ENCODE measurements at regions of chr17 and their contacts with region 1.

Region 1: DNA sequence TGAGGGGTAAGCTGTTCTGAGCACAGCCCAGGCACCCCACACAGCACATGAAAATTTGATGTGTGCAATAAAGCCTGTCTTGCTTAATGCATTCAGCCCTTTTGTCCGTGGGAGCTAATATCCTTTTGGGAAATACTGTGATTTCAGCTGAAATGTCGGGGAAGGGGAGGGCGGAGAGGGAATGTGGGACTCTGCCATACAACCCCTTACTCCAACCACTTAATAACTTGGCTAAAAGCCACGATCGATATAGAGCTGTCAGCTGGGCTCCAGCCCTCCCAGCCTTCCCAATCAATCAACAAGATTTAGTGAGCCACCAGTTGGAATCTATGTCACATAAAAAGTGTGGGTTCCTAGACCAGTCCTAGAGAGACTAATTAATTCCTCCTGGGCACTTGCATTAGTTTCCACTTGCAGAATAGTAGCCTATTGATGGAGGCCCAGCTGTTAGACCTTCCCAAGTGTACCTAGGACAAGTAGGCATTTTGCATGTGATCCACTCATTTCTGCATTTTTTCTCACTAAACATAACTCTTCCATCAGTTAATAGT is 82.7 kb upstream of the PIRT start:
- DNase-seq: no peak
- H3K4me3 ChIP-seq: no peak overlapping the region
- H3K27ac ChIP-seq: no peak overlapping the region
- H3K4me1 ChIP-seq: no peaks in the 10 kb centered on the region
- H3K27me3 ChIP-seq: no peaks in the 10 kb centered on the region
- CTCF ChIP-seq: no peak
- EP300 ChIP-seq: no peak
- POLR2A ChIP-seq: no peak

Region 2: DNA sequence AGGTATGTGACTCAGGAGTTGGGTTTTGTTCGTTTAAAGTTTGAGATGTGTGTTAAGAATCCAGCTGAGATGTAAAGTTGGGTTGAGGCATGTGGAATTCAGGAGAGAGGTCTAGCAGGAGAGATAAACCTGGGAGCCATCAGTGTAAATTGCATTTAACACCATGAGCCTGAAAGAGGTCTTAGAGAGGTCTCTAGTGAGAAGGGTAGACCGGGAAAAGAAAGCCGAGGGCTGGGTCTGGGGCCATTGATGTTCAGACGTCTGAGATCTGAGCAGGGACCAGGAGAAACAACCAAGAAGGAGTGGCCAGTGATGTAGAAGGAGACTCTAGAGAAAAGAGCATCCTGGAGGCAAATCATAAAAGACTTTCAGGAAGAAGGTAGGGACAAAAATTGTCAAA is 38.7 kb before region 1 on chr17:
- intact Hi-C with region 1: loop called (anchors 2 kb)
- DNase-seq: no peak
- H3K4me3 ChIP-seq: no peak overlapping the region
- H3K27ac ChIP-seq: no peak overlapping the region
- H3K4me1 ChIP-seq: no peaks in the 10 kb centered on the region
- H3K27me3 ChIP-seq: peaks cover 0 to 26% (median 0%) of the 10 kb centered on the region in 4 donors
- CTCF ChIP-seq: no peak
- EP300 ChIP-seq: no peak
- POLR2A ChIP-seq: no peak

Region 3: DNA sequence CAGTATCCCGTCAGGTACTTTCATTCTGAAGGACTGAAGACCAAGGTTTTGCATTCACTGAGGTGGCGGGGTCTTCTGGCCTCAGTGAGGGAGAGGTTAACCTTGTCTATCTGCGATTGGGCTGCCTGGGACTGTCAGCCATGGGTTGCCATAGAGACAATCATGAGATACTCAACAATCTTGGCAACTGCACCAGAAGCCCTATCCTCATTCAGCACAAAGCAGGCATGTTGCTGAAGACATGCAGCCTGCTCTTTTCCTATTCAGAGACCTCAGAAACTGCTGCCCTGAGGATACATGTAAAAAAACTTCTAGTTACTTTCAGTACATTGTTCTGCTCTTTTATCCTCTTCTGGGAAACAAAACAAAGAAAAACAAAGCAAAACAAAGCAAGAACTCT is 63.6 kb after region 1 on chr17:
- intact Hi-C with region 1: no loop called
- DNase-seq: peak; percentile 26
- H3K4me3 ChIP-seq: no peak overlapping the region
- H3K27ac ChIP-seq: no peak overlapping the region
- H3K4me1 ChIP-seq: no peaks in the 10 kb centered on the region
- H3K27me3 ChIP-seq: no peaks in the 10 kb centered on the region
- CTCF ChIP-seq: no peak
- EP300 ChIP-seq: no peak
- POLR2A ChIP-seq: no peak

Measured in esophagus muscularis mucosa (tissue), 4 donors.